ENCODE measurements at regions of chr6 and their contacts with region 1.

Region 1: GRCh38 chr6:148177589-148178233 is 164.9 kb upstream of the SASH1 start:
- DNase-seq: peak in 1 of 2 donors; percentile 81
- H3K4me3 ChIP-seq: no peak overlapping the region
- H3K27ac ChIP-seq: no peak overlapping the region
- H3K4me1 ChIP-seq: no peaks in the 10 kb centered on the region
- H3K27me3 ChIP-seq: no peaks in the 10 kb centered on the region
- CTCF ChIP-seq: peak; percentile 77 to 85 (median 82)

Region 2: DNA sequence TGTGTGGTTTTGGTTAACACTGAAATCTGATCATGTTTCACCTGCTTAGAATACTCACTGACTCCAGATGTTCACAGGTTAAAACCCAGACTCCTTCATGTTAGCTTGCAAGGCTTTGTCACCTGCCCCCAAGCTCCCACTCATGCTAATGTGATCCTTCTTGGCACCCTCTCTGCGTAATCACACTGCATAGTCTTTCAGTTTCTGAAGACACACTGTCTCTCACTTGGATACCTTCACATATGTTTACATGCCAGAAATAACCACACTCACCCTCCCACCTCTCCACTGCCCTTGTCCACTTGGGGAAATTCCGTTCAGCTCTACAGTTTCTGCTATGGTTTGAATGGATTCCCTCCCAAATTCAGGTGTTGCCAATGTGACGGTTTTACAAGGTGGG is 69.8 kb before region 1 on chr6:
- intact Hi-C with region 1: no loop called
- DNase-seq: no peak
- H3K4me3 ChIP-seq: no peak overlapping the region
- H3K27ac ChIP-seq: no peak overlapping the region
- H3K4me1 ChIP-seq: no peaks in the 10 kb centered on the region
- H3K27me3 ChIP-seq: no peaks in the 10 kb centered on the region
- CTCF ChIP-seq: no peak

Region 3: GRCh38 chr6:148250975-148251685 is 73.4 kb after region 1 on chr6:
- intact Hi-C with region 1: loop called (anchors 1 kb)
- DNase-seq: no peak
- H3K4me3 ChIP-seq: no peak overlapping the region
- H3K27ac ChIP-seq: no peak overlapping the region
- H3K4me1 ChIP-seq: peaks cover 0 to 13% of the 10 kb centered on the region in 2 donors
- H3K27me3 ChIP-seq: no peaks in the 10 kb centered on the region
- CTCF ChIP-seq: peak in 2 of 3 experiments; percentile 44 to 67

Region 4: GRCh38 chr6:148414836-148415235 is 237.1 kb after region 1 on chr6:
- intact Hi-C with region 1: no loop called
- DNase-seq: no peak
- H3K4me3 ChIP-seq: no peak overlapping the region
- H3K27ac ChIP-seq: peak overlapping the region in 1 of 2 donors; percentile 2
- H3K4me1 ChIP-seq: peaks cover 5 to 24% of the 10 kb centered on the region in 2 donors
- H3K27me3 ChIP-seq: no peaks in the 10 kb centered on the region
- CTCF ChIP-seq: no peak

Region 5: DNA sequence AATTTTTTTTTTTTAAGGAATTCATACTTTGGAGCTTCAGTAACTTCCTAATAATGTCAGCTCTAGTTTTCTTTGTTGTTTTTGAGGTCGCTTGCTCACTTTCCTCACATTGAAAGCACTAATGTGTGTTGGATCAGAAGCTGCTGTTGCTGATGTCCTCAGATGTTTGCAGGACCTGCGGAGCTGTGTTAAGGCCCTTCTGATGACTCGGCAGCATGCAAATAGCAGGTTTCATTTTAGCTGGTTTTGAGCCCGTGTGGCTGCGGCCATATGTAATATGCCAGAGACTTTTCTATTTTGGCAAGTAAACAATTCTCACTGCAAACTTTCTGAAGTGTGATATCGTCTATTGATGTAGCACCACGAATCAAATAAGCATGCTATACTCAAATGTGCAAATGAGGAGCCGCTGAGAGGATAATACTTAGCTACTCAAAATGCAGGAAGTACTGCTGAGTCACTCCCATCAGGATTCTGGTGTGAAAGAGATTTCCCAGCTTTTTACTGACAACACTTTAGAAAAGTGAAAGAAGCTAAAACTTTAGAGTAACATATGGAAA is 352.8 kb after region 1 on chr6:
- intact Hi-C with region 1: loop called (anchors 5 kb)
- DNase-seq: peak in 1 of 2 donors; percentile 80
- H3K4me3 ChIP-seq: peak overlapping the region in 1 of 2 donors; percentile 51
- H3K27ac ChIP-seq: peak overlapping the region; percentile 77
- H3K4me1 ChIP-seq: peaks cover 0 to 22% of the 10 kb centered on the region in 2 donors
- H3K27me3 ChIP-seq: no peaks in the 10 kb centered on the region
- CTCF ChIP-seq: no peak

Measured in ascending aorta (tissue), 2 donors.